A673 (cell line): ENCODE measurements at regions of chr12 and their contacts with region 1.

Region 1: GRCh38 chr12:104201238-104202001 is 14.2 kb upstream of the TXNRD1 start:
- DNase-seq: peak; percentile 75
- H3K4me3 ChIP-seq: no peak overlapping the region
- H3K27ac ChIP-seq: no peak overlapping the region
- H3K4me1 ChIP-seq: no peaks in the 10 kb centered on the region
- H3K27me3 ChIP-seq: no peaks in the 10 kb centered on the region
- CTCF ChIP-seq: peak; percentile 88

Region 2: DNA sequence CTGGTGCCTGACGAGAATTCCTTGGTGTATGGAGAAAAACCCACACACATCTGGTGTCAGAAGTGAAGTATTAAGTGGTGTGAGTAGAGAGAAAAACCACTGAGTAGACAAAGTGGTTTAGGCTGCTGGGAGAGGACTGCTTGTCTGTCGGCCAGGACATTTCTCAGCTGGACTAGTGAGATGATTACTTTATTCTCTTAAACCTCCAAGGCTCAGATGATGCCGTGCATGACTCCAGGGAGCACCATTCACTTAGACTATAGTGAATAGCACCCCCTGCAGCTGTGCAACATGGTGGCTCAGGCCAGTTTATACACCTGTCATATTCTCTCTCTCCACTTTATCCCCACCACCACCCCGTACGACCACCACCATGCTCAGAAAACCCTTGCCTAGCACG is 35.0 kb before region 1 on chr12:
- CTCF ChIA-PET with region 1: no interaction called
- POLR2A ChIA-PET with region 1: no interaction called
- intact Hi-C with region 1: no loop called
- DNase-seq: no peak
- H3K4me3 ChIP-seq: no peak overlapping the region
- H3K27ac ChIP-seq: no peak overlapping the region
- H3K4me1 ChIP-seq: no peaks in the 10 kb centered on the region
- H3K27me3 ChIP-seq: no peaks in the 10 kb centered on the region
- CTCF ChIP-seq: no peak

Region 3: GRCh38 chr12:104286538-104287482 is 85.4 kb after region 1 on chr12:
- CTCF ChIA-PET with region 1: interaction called, 13 read pairs
- POLR2A ChIA-PET with region 1: no interaction called
- intact Hi-C with region 1: no loop called
- DNase-seq: peak; percentile 97
- H3K4me3 ChIP-seq: peak overlapping the region; percentile 80
- H3K27ac ChIP-seq: peak overlapping the region; percentile 95
- H3K4me1 ChIP-seq: peaks cover 22% of the 10 kb centered on the region
- H3K27me3 ChIP-seq: no peaks in the 10 kb centered on the region
- CTCF ChIP-seq: no peak

Region 4: GRCh38 chr12:104381731-104382480 is 180.5 kb after region 1 on chr12:
- CTCF ChIA-PET with region 1: no interaction called
- POLR2A ChIA-PET with region 1: no interaction called
- intact Hi-C with region 1: loop called (anchors 1 kb)
- DNase-seq: peak; percentile 78
- H3K4me3 ChIP-seq: no peak overlapping the region
- H3K27ac ChIP-seq: no peak overlapping the region
- H3K4me1 ChIP-seq: no peaks in the 10 kb centered on the region
- H3K27me3 ChIP-seq: no peaks in the 10 kb centered on the region
- CTCF ChIP-seq: peak; percentile 96

Region 5: GRCh38 chr12:104510145-104510872 is 308.9 kb after region 1 on chr12:
- CTCF ChIA-PET with region 1: no interaction called
- POLR2A ChIA-PET with region 1: no interaction called
- intact Hi-C with region 1: no loop called
- DNase-seq: no peak
- H3K4me3 ChIP-seq: no peak overlapping the region
- H3K27ac ChIP-seq: no peak overlapping the region
- H3K4me1 ChIP-seq: no peaks in the 10 kb centered on the region
- H3K27me3 ChIP-seq: peaks cover 5% of the 10 kb centered on the region
- CTCF ChIP-seq: no peak

Region 6: GRCh38 chr12:104653730-104654664 is 452.6 kb after region 1 on chr12:
- CTCF ChIA-PET with region 1: no interaction called
- POLR2A ChIA-PET with region 1: no interaction called
- intact Hi-C with region 1: loop called (anchors 10 kb)
- DNase-seq: peak; percentile 54
- H3K4me3 ChIP-seq: no peak overlapping the region
- H3K27ac ChIP-seq: no peak overlapping the region
- H3K4me1 ChIP-seq: no peaks in the 10 kb centered on the region
- H3K27me3 ChIP-seq: no peaks in the 10 kb centered on the region
- CTCF ChIP-seq: peak; percentile 61

Region 7: DNA sequence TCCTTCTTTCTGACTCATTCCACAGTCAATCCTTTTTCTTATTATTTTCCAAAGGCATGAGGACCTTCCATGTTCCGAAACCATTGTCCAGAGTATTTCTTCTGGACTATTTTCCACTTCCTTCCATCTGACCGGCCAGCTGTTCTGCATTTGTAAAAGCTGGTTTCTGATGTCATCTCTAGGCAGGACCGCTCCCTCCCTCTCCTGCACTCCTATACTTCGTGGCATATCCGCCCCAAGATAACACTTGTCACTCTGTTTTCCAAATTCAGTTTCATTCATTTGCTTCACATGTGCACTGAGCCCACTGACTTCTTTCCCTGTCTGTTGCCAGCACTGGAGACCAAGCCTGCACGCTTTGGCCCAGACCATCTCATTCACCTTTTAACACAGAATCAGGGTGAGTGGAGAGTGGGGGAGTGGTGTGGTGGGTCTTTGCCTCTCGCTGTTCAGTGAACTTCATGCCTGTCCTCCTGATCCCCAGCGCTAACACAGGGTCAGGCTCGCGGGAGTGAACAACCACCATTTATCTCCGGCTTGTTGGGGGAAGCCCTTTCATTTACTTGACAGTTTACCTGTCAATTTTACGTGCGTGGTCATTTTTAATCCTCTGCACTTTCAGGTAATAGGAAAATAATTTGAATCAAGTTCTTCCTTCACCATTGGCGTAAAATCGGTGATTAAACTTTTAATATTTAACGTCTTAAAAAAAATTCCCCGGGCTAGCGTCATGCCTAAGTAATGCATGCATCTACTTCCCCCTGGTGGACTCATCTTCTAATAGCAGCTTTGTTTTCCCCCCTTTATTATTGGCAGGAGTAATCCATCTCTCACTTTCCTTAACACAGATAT is 1181.6 kb after region 1 on chr12:
- CTCF ChIA-PET with region 1: no interaction called
- POLR2A ChIA-PET with region 1: no interaction called
- intact Hi-C with region 1: loop called (anchors 10 kb)
- DNase-seq: peak; percentile 82
- H3K4me3 ChIP-seq: peak overlapping the region; percentile 28
- H3K27ac ChIP-seq: no peak overlapping the region
- H3K4me1 ChIP-seq: peaks cover 4% of the 10 kb centered on the region
- H3K27me3 ChIP-seq: no peaks in the 10 kb centered on the region
- CTCF ChIP-seq: peak; percentile 83